ENCODE measurements at regions of chr11 and their contacts with region 1.

Region 1: GRCh38 chr11:10653926-10654810 is 39.4 kb downstream of the IRAG1 start:
- DNase-seq: peak; percentile 48 to 78 (median 77)
- H3K4me3 ChIP-seq: no peak overlapping the region
- H3K4me3 Mint-ChIP-seq: no peak overlapping the region
- H3K27ac ChIP-seq: peak overlapping the region in 1 of 2 donors; percentile 52
- H3K27ac Mint-ChIP-seq: peak overlapping the region in 6 of 7 donors; percentile 63 to 86 (median 74)
- H3K4me1 ChIP-seq: peaks cover 63 to 68% of the 10 kb centered on the region in 2 donors
- H3K4me1 Mint-ChIP-seq: peaks cover 67% of the 10 kb centered on the region
- H3K27me3 ChIP-seq: no peaks in the 10 kb centered on the region
- H3K27me3 Mint-ChIP-seq: peaks cover 1 to 5% (median 2%) of the 10 kb centered on the region in 3 donors
- CTCF ChIP-seq: peak; percentile 86

Region 2: GRCh38 chr11:10400856-10401255 is 253.3 kb before region 1 on chr11:
- intact Hi-C with region 1: loop called in 1 of 2 experiments (anchors 5 kb)
- DNase-seq: peak in 2 of 3 donors; percentile 24 to 55
- H3K4me3 ChIP-seq: no peak overlapping the region
- H3K4me3 Mint-ChIP-seq: peak overlapping the region in 1 of 2 donors; percentile 35
- H3K27ac ChIP-seq: no peak overlapping the region
- H3K27ac Mint-ChIP-seq: peak overlapping the region in 3 of 7 donors; percentile 19 to 67 (median 54)
- H3K4me1 ChIP-seq: peaks cover 39% of the 10 kb centered on the region in 2 donors
- H3K4me1 Mint-ChIP-seq: peaks cover 45% of the 10 kb centered on the region
- H3K27me3 ChIP-seq: no peaks in the 10 kb centered on the region
- H3K27me3 Mint-ChIP-seq: peaks cover 3 to 10% (median 7%) of the 10 kb centered on the region in 3 donors
- CTCF ChIP-seq: no peak

Region 3: DNA sequence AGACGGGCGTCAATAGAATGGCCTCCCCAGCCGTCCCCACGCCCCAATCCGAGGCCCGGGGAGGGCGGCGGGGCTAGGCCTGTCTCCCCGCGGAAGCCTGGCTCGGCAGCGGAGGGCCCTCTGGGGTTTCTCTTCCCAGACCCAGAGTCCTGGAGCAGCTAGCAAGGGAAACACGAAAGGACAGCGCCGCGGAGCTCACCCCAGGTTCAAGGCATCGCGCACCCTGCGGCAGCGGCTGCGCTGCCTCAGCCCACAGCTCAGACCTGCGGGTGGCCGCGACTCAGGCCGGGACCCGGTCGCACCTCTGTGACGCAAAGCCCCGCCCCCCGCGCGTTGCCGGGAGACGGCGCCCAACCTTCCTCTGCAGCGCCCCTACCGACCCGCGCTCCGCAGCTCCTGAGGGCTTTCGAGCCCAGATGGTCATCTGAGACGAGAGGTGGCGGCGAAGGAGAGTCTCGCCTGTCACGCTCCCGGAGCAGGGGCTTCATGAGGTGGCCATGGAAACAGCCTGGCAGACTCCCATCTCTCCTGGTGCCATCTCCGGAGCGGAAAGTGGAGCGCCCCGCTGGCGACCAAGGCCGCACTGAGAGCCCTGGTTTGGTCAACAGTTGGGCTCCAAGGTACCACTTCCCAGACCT is 113.1 kb before region 1 on chr11 and contains the start of gene RNF141:
- intact Hi-C with region 1: loop called in 1 of 2 experiments (anchors 10 kb)
- DNase-seq: peak; percentile 89 to 92 (median 91)
- H3K4me3 ChIP-seq: peak within 1 kb of the TSS; percentile 74 to 81 (median 78)
- H3K4me3 Mint-ChIP-seq: peak within 1 kb of the TSS; percentile 90 to 94
- H3K27ac ChIP-seq: peak within 1 kb of the TSS; percentile 72 to 78
- H3K27ac Mint-ChIP-seq: peak within 1 kb of the TSS; percentile 88 to 93 (median 91)
- H3K4me1 ChIP-seq: peaks cover 27 to 36% of the 10 kb centered on the region in 2 donors
- H3K4me1 Mint-ChIP-seq: peaks cover 34% of the 10 kb centered on the region
- H3K27me3 ChIP-seq: no peaks in the 10 kb centered on the region
- H3K27me3 Mint-ChIP-seq: no peaks in the 10 kb centered on the region
- CTCF ChIP-seq: peak; percentile 90
- polyA plus RNA-seq, gene RNF141: 19.7 to 114 (median 98.3) TPM

Region 4: GRCh38 chr11:10606536-10607208 is 47.5 kb before region 1 on chr11:
- intact Hi-C with region 1: loop called in 1 of 2 experiments (anchors 5 kb)
- DNase-seq: peak; percentile 84 to 94 (median 90)
- H3K4me3 ChIP-seq: peak overlapping the region; percentile 39 to 76 (median 71)
- H3K4me3 Mint-ChIP-seq: peak overlapping the region; percentile 72 to 88
- H3K27ac ChIP-seq: peak overlapping the region; percentile 79 to 95
- H3K27ac Mint-ChIP-seq: peak overlapping the region; percentile 94 to 99 (median 97)
- H3K4me1 ChIP-seq: peaks cover 100% of the 10 kb centered on the region in 2 donors
- H3K4me1 Mint-ChIP-seq: peaks cover 99% of the 10 kb centered on the region
- H3K27me3 ChIP-seq: no peaks in the 10 kb centered on the region
- H3K27me3 Mint-ChIP-seq: peaks cover 0 to under 1% (median 0%) of the 10 kb centered on the region in 3 donors
- CTCF ChIP-seq: no peak

Measured in CD14-positive monocyte (primary cell).